Heart left ventricle (tissue), 16 donors: ENCODE measurements at regions of chr7 and their contacts with region 1.

Region 1: GRCh38 chr7:48454750-48455192 is 283.5 kb downstream of the ABCA13 start:
- DNase-seq: peak in 1 of 5 donors; percentile 55
- ATAC-seq: peak in 1 of 4 donors; percentile 31
- H3K4me3 ChIP-seq: no peak overlapping the region
- H3K27ac ChIP-seq: no peak overlapping the region
- H3K4me1 ChIP-seq: no peaks in the 10 kb centered on the region
- H3K27me3 ChIP-seq: no peaks in the 10 kb centered on the region
- CTCF ChIP-seq: no peak
- POLR2A ChIP-seq: no peak

Region 2: DNA sequence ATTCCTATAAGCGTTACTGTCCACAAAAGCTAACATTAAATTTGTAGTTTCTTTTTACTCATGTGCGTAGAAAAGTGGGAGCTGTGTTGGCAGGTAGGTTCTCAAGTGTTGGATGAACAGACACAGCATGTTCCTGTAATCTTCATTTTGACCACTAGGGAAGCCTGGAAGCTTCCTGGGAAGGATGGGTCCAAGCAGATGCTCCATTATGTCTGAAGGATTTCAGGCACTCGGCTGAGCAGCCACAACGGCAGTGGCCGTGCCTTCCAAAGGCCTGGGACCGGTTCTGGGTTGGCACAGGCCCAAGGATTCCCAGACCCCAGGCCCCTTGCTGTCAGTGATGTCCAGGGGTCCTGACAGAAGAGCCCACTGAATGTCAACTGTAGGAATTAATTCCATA is 1259.1 kb before region 1 on chr7:
- intact Hi-C with region 1: no loop called
- DNase-seq: no peak
- ATAC-seq: no peak
- H3K4me3 ChIP-seq: no peak overlapping the region
- H3K27ac ChIP-seq: no peak overlapping the region
- H3K4me1 ChIP-seq: peaks cover 0 to 19% (median 4%) of the 10 kb centered on the region in 12 donors
- H3K27me3 ChIP-seq: no peaks in the 10 kb centered on the region
- CTCF ChIP-seq: peak in 3 of 12 donors; percentile 10 to 28 (median 26)
- POLR2A ChIP-seq: no peak

Region 3: DNA sequence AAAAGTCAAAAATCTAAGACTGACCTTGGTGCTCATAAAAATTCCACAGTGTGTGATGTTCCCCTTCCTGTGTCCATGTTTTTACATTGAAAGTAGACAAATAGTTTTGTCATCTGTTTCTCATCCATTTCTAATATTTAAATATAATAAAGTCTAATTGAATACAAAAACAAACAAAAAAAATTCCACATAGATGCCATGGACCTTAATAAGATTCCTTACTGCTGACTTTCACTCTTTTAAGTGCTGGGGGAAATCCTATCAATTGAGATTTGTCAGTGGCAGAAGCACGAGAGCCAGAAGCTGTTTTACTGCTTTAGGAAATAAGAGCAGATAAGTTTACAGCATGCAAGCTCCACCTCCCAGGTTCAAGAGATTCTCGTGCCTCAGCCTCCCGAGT is 26.5 kb after region 1 on chr7:
- intact Hi-C with region 1: loop called in 1 of 10 experiments (anchors 2 kb)
- DNase-seq: no peak
- ATAC-seq: no peak
- H3K4me3 ChIP-seq: no peak overlapping the region
- H3K27ac ChIP-seq: no peak overlapping the region
- H3K4me1 ChIP-seq: no peaks in the 10 kb centered on the region
- H3K27me3 ChIP-seq: no peaks in the 10 kb centered on the region
- CTCF ChIP-seq: no peak
- POLR2A ChIP-seq: no peak